ENCODE measurements at regions of chr6 and their contacts with region 1.

Region 1: GRCh38 chr6:143575440-143575839 is 63.9 kb upstream of the FUCA2 start:
- DNase-seq: peak; percentile 36
- H3K4me3 Mint-ChIP-seq: no peak overlapping the region
- H3K27ac Mint-ChIP-seq: no peak overlapping the region
- H3K4me1 Mint-ChIP-seq: peaks cover 7% of the 10 kb centered on the region
- H3K27me3 Mint-ChIP-seq: no peaks in the 10 kb centered on the region

Region 2: DNA sequence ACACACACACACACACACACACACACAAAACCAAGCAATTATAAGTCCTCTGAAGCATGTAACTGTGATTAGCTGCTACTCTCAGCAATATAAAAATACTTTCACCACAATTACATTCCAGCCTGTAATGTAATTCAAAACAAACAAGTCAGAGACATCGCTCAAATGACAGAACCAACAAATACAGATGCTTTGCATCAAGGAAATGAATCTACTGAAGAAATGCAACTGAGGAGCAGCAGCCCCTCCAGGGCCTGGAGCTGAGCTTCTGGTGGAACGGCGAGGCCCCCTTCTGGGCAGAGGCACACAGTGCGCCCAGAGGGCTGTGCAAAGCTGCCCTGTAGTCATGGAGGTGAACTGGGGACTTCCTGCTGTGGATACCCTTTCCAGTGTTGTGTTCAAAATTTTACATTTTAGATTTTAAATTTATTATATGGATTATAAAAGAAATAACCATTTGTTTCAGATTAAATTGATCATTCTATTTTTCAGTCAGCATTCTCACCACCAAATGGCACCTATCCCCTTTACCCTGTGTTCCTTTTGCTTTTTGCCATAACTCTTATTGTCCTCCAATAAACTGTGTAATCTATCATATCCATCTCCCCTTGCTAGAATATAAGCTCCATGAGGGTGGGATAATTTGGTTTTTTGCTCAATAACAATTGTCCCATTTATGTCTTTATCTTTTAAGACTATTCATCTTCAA is 148.2 kb before region 1 on chr6:
- intact Hi-C with region 1: no loop called
- DNase-seq: peak; percentile 57
- H3K4me3 Mint-ChIP-seq: no peak overlapping the region
- H3K27ac Mint-ChIP-seq: peak overlapping the region; percentile 22
- H3K4me1 Mint-ChIP-seq: peaks cover 4% of the 10 kb centered on the region
- H3K27me3 Mint-ChIP-seq: no peaks in the 10 kb centered on the region

Region 3: DNA sequence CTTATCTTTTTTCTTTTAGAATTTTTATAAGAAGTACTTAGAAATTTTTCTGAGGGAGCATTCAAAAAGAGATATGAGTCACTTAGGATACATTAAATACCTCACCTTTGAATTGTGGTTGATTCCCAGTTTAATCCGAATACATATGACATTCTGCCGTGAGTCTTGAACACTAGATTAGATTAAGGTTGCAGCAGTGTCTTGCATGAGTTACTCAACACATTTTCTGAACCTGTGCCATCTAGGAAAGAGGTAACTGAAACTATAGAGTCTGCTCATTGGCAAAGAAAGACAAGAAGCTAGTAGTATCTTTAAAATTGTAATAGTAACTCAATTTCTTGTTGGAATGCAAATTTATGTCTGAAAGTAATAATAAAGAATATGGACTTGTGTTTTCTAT is 109.9 kb before region 1 on chr6:
- intact Hi-C with region 1: no loop called
- DNase-seq: no peak
- H3K4me3 Mint-ChIP-seq: no peak overlapping the region
- H3K27ac Mint-ChIP-seq: no peak overlapping the region
- H3K4me1 Mint-ChIP-seq: no peaks in the 10 kb centered on the region
- H3K27me3 Mint-ChIP-seq: no peaks in the 10 kb centered on the region

Region 4: DNA sequence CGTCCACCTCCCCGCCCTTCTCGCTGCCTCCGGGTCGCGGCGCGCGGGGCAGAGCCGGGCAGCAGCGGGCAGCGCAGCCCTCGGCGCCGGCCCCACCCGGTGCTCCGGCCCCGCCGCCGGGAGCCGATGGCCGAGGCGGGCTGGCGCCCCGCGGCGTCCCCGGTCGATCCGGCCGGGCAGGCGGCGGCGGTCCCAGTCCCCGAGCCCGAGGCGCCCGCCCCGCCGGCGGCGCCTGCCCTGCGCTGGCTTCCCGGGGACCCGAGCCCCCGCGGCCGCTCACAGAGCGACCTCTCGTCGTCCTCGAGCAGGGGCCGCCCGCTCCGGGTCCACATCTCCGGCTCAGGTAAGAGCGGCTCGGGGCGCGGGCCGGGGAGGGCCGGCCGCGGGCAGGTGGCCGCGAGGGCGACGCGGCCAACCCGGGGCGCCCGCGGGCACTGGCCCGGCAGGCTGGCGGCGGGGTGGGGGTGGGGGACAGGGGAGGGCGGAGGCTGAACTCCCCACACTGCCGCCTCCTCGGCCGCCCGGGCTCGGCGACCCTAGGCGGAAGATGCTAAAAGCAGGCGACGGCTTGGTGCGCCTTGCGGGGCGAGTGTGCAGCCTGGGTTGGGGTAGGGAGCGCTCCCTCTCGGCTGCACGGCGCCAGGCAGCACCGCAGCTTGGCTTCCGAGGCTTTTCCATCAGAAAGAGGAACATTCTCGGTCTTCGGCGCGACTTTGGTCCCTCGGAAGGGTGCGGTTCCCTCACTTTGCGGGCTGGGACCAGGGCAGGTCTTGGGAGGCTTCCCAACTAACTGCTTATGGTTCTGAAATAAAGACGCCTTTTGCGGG is 38.4 kb before region 1 on chr6:
- intact Hi-C with region 1: loop called (anchors 2 kb)
- DNase-seq: peak; percentile 61
- H3K4me3 Mint-ChIP-seq: peak overlapping the region; percentile 80
- H3K27ac Mint-ChIP-seq: peak overlapping the region; percentile 64
- H3K4me1 Mint-ChIP-seq: peaks cover 39% of the 10 kb centered on the region
- H3K27me3 Mint-ChIP-seq: no peaks in the 10 kb centered on the region

Region 5: DNA sequence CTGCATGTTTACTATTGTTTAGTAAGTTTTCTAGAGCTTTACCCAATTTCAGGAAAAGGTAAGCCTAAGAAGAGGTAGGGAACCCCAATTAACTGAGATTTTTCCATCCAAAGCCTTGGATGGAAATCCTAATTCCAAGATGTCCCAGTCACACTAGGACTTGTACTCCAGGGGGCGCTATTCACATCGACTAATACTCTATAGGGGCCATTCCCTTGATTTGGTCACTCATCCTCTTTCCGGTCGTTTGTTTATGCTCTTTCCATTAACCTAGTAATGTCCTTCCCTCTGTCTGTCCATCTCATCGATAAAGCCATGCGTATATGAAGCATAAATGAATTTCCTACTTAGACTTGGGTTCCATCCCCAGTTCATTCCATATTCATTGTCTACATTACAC is 16.9 kb after region 1 on chr6:
- intact Hi-C with region 1: no loop called
- DNase-seq: no peak
- H3K4me3 Mint-ChIP-seq: no peak overlapping the region
- H3K27ac Mint-ChIP-seq: no peak overlapping the region
- H3K4me1 Mint-ChIP-seq: peaks cover 6% of the 10 kb centered on the region
- H3K27me3 Mint-ChIP-seq: no peaks in the 10 kb centered on the region

Region 6: GRCh38 chr6:143842902-143843676 is 267.6 kb after region 1 on chr6 and contains the start of gene LTV1:
- intact Hi-C with region 1: loop called (anchors 2 kb)
- DNase-seq: peak; percentile 90
- H3K4me3 Mint-ChIP-seq: peak within 1 kb of the TSS; percentile 97
- H3K27ac Mint-ChIP-seq: peak within 1 kb of the TSS; percentile 96
- H3K4me1 Mint-ChIP-seq: peaks cover 17% of the 10 kb centered on the region
- H3K27me3 Mint-ChIP-seq: no peaks in the 10 kb centered on the region
- total RNA-seq, gene LTV1: 41.2 and 44.7 TPM in 2 replicates

Region 7: DNA sequence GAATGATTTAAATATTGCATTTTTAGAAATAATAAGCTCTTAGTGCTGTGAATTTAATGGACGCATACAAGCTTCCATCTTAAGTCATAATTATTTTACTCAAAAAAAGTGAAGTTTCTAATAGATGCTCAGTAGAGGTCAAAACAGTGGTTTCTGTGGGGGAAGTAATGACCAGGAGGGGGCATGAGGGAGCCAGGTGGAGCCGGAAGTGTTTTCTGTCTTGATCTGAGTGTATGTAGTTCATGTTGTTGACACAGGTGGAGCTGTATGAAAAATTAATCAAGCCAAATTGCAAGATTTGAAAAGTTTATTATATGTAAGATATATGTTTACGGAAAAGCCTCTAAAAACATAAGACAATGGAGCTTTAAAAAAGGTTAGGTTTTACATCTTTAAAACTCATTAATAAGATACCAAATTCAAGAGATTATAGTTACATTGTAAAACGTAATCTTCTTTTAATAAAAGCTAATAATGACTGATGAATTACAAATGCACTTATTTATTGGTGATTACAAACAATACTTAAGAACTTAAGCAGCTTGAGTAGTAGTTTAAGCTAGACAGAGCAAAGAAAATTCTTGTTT is 364.7 kb after region 1 on chr6:
- intact Hi-C with region 1: loop called (anchors 1 kb)
- DNase-seq: peak; percentile 47
- H3K4me3 Mint-ChIP-seq: no peak overlapping the region
- H3K27ac Mint-ChIP-seq: no peak overlapping the region
- H3K4me1 Mint-ChIP-seq: peaks cover 6% of the 10 kb centered on the region
- H3K27me3 Mint-ChIP-seq: peaks cover 3% of the 10 kb centered on the region

Region 8: GRCh38 chr6:144013486-144013909 is 438.1 kb after region 1 on chr6:
- intact Hi-C with region 1: loop called (anchors 1 kb)
- DNase-seq: peak; percentile 32
- H3K4me3 Mint-ChIP-seq: no peak overlapping the region
- H3K27ac Mint-ChIP-seq: no peak overlapping the region
- H3K4me1 Mint-ChIP-seq: peaks cover 4% of the 10 kb centered on the region
- H3K27me3 Mint-ChIP-seq: peaks cover 37% of the 10 kb centered on the region

Measured in activated T-helper 2 cell treated with anti-CD3 and anti-CD28 coated beads, Interferon-gamma antibody, Interleukin-2, Interleukin-4, amounts not matched to agents 10 μg/mL and 5 μg/mL and 100 μg/mL, durations not matched to agents 14 hours and 24 hours and 36 hours (primary cell).